ENCODE measurements at regions of chr3 and their contacts with region 1.

Region 1: DNA sequence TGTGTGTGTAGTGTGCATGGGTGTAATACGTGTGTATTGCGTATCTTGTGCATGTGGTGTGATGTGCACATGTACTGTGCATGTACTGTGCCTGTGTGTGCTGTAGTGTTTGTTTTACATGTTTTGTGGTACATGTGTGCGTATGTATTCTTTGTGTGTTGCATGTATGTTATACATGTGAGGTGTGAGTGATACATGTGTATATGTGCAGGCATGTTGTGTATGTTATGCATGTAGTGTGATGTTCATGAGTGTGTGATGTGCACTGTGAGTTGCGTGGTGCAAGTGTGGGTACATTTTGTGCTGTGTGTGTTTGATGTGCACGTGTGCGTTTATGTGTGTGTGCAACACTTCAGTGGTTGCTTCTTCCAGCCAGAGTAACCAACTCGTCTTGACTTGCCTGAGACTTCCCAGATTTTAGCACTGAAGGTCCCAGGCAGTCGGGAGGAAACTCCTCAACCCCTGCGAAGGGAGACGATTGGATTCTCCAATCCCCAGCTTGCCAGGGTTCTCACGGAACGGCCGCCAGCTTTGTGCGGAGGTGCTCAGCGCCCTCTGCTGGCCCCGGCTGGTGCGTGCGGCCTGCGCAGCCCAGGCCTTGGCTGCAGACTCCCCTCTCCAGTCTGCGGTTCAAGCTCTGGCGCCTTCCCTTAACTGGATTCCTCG is 3.6 kb downstream of the GALNT15 start:
- DNase-seq: peak; percentile 88 to 94 (median 91)
- H3K4me3 ChIP-seq: peak overlapping the region; percentile 38
- H3K27ac ChIP-seq: no peak overlapping the region
- H3K4me1 ChIP-seq: peaks cover 14% of the 10 kb centered on the region
- H3K27me3 ChIP-seq: no peaks in the 10 kb centered on the region
- CTCF ChIP-seq: peak; percentile 93 to 95 (median 94)
- EP300 ChIP-seq: no peak
- POLR2A ChIP-seq: peak; percentile 16

Region 2: DNA sequence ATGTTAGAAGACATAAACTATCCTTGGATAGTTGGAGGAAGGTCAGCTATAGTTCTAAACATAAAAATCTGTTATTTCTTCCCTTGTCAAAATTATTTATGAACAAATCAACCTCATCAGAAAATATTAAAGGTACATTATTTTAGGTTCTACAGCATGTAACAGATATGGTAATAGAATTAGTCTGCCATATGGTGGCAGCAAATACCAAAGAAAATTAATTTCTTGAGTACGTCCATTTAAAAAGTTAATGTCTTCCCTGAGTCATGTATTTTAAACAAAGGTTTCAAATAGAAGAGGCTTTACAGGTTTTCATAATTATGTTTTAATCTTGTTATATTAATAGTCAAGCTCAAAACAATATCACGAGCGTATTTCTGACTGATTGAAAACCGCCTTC is 362.4 kb before region 1 on chr3:
- intact Hi-C with region 1: loop called in 2 of 4 experiments (anchors 5 to 10 kb)
- DNase-seq: no peak
- H3K4me3 ChIP-seq: no peak overlapping the region
- H3K27ac ChIP-seq: no peak overlapping the region
- H3K4me1 ChIP-seq: peaks cover 3% of the 10 kb centered on the region
- H3K27me3 ChIP-seq: no peaks in the 10 kb centered on the region
- CTCF ChIP-seq: peak in 2 of 3 donors; percentile 36 to 48
- EP300 ChIP-seq: no peak
- POLR2A ChIP-seq: no peak

Region 3: DNA sequence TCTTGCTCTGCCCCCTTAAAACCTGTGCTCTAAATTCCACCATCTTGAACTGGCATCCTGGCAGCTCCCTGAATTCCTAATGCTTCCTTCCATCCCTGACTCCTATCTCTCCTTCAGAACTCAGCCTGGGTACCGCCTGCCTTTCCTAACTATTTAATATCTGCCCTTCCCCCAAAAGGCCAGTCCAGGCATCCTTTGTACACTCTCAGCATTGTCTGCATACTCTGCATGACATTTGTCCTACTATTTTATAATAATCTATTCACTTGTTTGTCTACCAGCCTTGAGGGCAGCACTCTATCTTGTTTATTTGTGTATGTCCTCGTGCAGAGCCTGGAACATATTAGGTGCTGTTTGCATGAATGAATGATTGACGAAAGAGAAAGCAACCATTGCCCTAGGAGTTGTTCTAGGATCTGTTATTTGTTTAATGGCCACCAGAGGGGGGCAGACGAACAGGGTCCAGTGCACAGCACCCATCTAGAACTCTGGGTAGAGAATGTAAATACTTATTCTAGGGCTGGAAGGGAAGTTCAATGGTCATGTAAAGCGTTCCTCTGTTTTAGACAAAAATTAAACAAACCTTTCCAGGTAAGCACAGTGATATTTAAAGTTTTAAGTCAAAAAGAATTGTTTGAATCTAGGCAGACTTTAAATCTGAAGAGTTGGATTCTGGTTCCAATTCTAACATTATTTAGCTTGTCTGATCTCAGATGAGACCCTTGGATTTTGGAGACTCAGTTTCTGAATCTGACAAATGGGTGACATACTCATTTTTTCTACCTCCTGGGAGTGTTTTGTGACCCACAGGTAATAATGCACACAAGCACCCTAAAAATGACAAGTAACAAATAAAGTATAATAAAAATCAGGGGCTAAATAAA is 129.4 kb before region 1 on chr3:
- intact Hi-C with region 1: loop called (anchors 2 to 5 kb)
- DNase-seq: peak in 2 of 5 donors; percentile 32 to 70
- H3K4me3 ChIP-seq: no peak overlapping the region
- H3K27ac ChIP-seq: no peak overlapping the region
- H3K4me1 ChIP-seq: peaks cover 5% of the 10 kb centered on the region
- H3K27me3 ChIP-seq: no peaks in the 10 kb centered on the region
- CTCF ChIP-seq: peak; percentile 70 to 87 (median 80)
- EP300 ChIP-seq: no peak
- POLR2A ChIP-seq: no peak

Region 4: GRCh38 chr3:16090024-16090423 is 88.1 kb before region 1 on chr3:
- intact Hi-C with region 1: loop called in 1 of 4 experiments (anchors 10 kb)
- DNase-seq: peak in 1 of 5 donors; percentile 34
- H3K4me3 ChIP-seq: no peak overlapping the region
- H3K27ac ChIP-seq: peak overlapping the region in 1 of 2 donors; percentile 57
- H3K4me1 ChIP-seq: peaks cover 29% of the 10 kb centered on the region
- H3K27me3 ChIP-seq: no peaks in the 10 kb centered on the region
- CTCF ChIP-seq: no peak
- EP300 ChIP-seq: no peak
- POLR2A ChIP-seq: no peak

Region 5: DNA sequence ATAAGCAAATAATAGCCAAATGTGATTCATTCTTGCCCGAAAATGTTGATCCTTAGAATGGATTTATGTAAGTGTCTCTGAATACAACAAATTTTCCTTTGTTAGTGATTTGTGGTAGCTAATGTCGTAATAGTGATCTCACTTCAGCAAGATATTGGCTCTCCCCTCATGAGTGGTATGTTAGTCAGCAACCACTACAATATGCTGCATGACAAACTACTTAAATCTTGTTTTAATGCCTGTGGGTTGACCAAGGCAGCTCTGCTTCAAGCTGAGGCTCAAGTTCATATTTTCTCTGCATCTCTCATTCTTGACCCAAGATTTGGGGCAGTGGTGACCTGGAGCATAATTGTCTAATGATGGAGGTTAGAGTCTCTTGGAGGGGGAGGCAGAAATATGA is 53.5 kb before region 1 on chr3:
- intact Hi-C with region 1: no loop called
- DNase-seq: no peak
- H3K4me3 ChIP-seq: no peak overlapping the region
- H3K27ac ChIP-seq: no peak overlapping the region
- H3K4me1 ChIP-seq: peaks cover under 1% of the 10 kb centered on the region
- H3K27me3 ChIP-seq: no peaks in the 10 kb centered on the region
- CTCF ChIP-seq: no peak
- EP300 ChIP-seq: no peak
- POLR2A ChIP-seq: no peak